ENCODE measurements at regions of chr12 and their contacts with region 1.

Region 1: DNA sequence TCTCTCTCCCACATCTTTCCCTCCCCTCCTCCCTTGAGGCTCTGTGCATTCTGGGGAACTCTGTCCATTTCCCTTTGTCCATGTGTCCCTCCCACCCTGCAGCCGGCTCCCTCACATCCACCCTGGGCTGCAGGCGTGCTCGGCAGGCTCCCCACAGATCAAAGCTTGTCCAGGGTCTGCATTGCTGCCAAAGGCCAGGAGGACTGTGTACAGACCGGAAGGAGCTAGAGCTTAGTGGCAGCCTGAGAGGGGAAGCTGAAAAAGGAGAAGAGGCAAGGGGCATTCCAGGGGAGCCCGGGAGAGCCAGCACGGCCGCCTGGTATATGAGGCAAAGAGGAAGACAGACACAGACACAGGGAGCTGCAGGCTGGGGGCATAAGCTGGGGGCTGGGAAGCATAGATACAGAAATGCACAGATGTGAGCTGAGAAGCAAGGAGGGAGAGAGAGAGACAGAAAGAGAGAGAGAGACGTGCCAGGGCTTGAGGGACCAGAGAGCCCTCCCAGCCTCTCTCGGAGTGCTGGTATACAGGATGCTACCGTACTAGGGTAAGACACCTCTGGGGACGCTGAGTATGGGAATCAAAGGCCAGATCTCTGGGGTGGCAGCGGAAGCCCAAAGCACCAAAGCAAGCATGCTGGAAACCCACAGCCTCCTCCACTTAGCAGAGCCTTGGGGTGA is 3.3 kb downstream of the CD4 start:
- DNase-seq: peak; percentile 59 to 73 (median 66)
- H3K4me3 ChIP-seq: peak overlapping the region; percentile 79
- H3K4me3 Mint-ChIP-seq: peak overlapping the region; percentile 95 to 99 (median 98)
- H3K27ac ChIP-seq: peak overlapping the region; percentile 83
- H3K27ac Mint-ChIP-seq: peak overlapping the region; percentile 90 to 99 (median 98)
- H3K4me1 ChIP-seq: peaks cover 55% of the 10 kb centered on the region
- H3K4me1 Mint-ChIP-seq: peaks cover 50 to 92% (median 66%) of the 10 kb centered on the region in 4 donors
- H3K27me3 ChIP-seq: no peaks in the 10 kb centered on the region
- H3K27me3 Mint-ChIP-seq: no peaks in the 10 kb centered on the region

Region 2: GRCh38 chr12:6423267-6424007 is 369.2 kb before region 1 on chr12:
- CTCF ChIA-PET with region 1: no interaction called
- POLR2A ChIA-PET with region 1: no interaction called
- intact Hi-C with region 1: loop called (anchors 10 kb)
- DNase-seq: peak; percentile 83 to 86 (median 85)
- H3K4me3 ChIP-seq: no peak overlapping the region
- H3K4me3 Mint-ChIP-seq: peak overlapping the region in 6 of 8 donors; percentile 12 to 56 (median 31)
- H3K27ac ChIP-seq: peak overlapping the region; percentile 8
- H3K27ac Mint-ChIP-seq: peak overlapping the region; percentile 68 to 90 (median 82)
- H3K4me1 ChIP-seq: peaks cover 42% of the 10 kb centered on the region
- H3K4me1 Mint-ChIP-seq: peaks cover 28 to 38% (median 33%) of the 10 kb centered on the region in 4 donors
- H3K27me3 ChIP-seq: no peaks in the 10 kb centered on the region
- H3K27me3 Mint-ChIP-seq: peaks cover 0 to 6% of the 10 kb centered on the region in 2 donors

Region 3: DNA sequence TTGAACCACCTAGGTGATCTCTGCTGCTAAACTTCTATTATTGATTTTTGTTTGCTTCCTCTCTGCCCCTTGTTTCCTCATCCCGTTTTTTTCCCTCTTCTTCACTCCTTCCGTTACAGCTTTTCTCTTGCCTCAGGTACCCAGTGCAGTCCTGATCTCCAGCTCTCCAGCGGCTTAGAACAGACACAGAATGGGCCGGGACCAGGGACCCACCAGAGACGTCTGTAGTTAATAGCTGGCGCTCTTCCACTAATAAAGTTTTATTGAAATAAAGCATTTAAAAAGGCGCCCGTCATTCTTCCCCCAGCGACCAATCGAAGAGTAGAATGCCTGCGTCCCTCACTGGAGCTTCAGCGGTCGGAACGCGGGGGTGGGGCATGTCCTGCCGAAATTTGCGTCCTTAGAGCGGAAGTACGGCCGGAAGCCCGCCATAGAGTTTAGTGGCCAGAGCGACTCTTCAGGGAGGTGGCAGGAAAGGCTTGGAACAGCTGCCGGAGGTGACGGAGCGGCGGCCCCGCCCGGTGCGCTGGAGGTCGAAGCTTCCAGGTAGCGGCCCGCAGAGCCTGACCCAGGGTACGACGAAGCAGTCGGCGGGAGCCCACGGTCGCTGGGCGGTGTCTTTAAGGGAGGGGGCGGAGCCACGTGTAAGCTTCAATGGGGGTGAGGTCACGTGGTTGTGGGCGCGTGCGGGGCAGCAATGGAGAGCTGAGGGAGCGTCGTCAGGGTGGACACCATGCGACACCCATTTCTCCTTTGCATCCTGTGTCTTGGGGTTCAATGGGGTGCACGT is 68.9 kb before region 1 on chr12 and contains the start of gene COPS7A:
- CTCF ChIA-PET with region 1: interaction called, 8 read pairs
- POLR2A ChIA-PET with region 1: interaction called, 18 read pairs
- intact Hi-C with region 1: no loop called
- DNase-seq: peak; percentile 93 to 97 (median 96)
- H3K4me3 ChIP-seq: peak within 1 kb of the TSS; percentile 40 to 64
- H3K4me3 Mint-ChIP-seq: peak within 1 kb of the TSS; percentile 88 to 98 (median 94)
- H3K27ac ChIP-seq: peak within 1 kb of the TSS; percentile 68
- H3K27ac Mint-ChIP-seq: peak within 1 kb of the TSS; percentile 92 to 99 (median 98)
- H3K4me1 ChIP-seq: peaks cover 21% of the 10 kb centered on the region
- H3K4me1 Mint-ChIP-seq: peaks cover 15 to 31% (median 22%) of the 10 kb centered on the region in 4 donors
- H3K27me3 ChIP-seq: no peaks in the 10 kb centered on the region
- H3K27me3 Mint-ChIP-seq: no peaks in the 10 kb centered on the region
- total RNA-seq, gene COPS7A: 36.9 to 37.7 TPM

Region 4: GRCh38 chr12:6771091-6771495 is 21.6 kb before region 1 on chr12:
- CTCF ChIA-PET with region 1: interaction called, 64 read pairs
- POLR2A ChIA-PET with region 1: interaction called, 23 read pairs
- intact Hi-C with region 1: loop called (anchors 2 kb)
- DNase-seq: no peak
- H3K4me3 ChIP-seq: no peak overlapping the region
- H3K4me3 Mint-ChIP-seq: peak overlapping the region in 2 of 8 donors; percentile 21 to 87
- H3K27ac ChIP-seq: no peak overlapping the region
- H3K27ac Mint-ChIP-seq: peak overlapping the region in 3 of 7 donors; percentile 14 to 60 (median 18)
- H3K4me1 ChIP-seq: peaks cover 46% of the 10 kb centered on the region
- H3K4me1 Mint-ChIP-seq: peaks cover 24 to 72% (median 46%) of the 10 kb centered on the region in 4 donors
- H3K27me3 ChIP-seq: peaks cover 20% of the 10 kb centered on the region
- H3K27me3 Mint-ChIP-seq: peaks cover 13 to 48% of the 10 kb centered on the region in 2 donors

Region 5: DNA sequence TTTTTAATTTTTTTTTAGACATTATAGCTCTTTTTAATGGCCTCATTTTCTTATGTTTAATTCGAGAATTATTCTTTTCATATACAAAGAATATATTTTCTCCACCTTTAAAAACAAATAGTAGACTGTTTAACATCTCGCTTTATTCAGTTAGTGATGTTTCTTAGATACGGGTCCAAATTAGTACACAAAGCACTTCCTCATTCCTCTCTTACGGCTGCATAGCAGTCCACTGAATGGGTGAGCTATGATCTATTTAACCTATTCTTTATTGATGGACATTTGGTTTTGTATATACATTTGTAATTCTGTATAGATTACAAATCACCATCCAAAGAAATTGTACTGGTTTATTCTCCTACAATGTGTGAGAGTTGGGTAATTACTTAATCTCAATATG is 20.7 kb after region 1 on chr12:
- CTCF ChIA-PET with region 1: interaction called, 3 read pairs
- POLR2A ChIA-PET with region 1: interaction called, 12 read pairs
- intact Hi-C with region 1: no loop called
- DNase-seq: no peak
- H3K4me3 ChIP-seq: no peak overlapping the region
- H3K4me3 Mint-ChIP-seq: no peak overlapping the region
- H3K27ac ChIP-seq: no peak overlapping the region
- H3K27ac Mint-ChIP-seq: no peak overlapping the region
- H3K4me1 ChIP-seq: no peaks in the 10 kb centered on the region
- H3K4me1 Mint-ChIP-seq: peaks cover 0 to 20% (median 16%) of the 10 kb centered on the region in 4 donors
- H3K27me3 ChIP-seq: no peaks in the 10 kb centered on the region
- H3K27me3 Mint-ChIP-seq: no peaks in the 10 kb centered on the region

Region 6: GRCh38 chr12:7210642-7211151 is 418.0 kb after region 1 on chr12:
- CTCF ChIA-PET with region 1: no interaction called
- POLR2A ChIA-PET with region 1: no interaction called
- intact Hi-C with region 1: no loop called
- DNase-seq: no peak
- H3K4me3 ChIP-seq: no peak overlapping the region
- H3K4me3 Mint-ChIP-seq: no peak overlapping the region
- H3K27ac ChIP-seq: no peak overlapping the region
- H3K27ac Mint-ChIP-seq: peak overlapping the region in 2 of 7 donors; percentile 37 to 59
- H3K4me1 ChIP-seq: no peaks in the 10 kb centered on the region
- H3K4me1 Mint-ChIP-seq: no peaks in the 10 kb centered on the region
- H3K27me3 ChIP-seq: no peaks in the 10 kb centered on the region
- H3K27me3 Mint-ChIP-seq: no peaks in the 10 kb centered on the region